Panc1 (cell line): ENCODE measurements at regions of chr4 and their contacts with region 1.

Region 1: GRCh38 chr4:109424093-109424841 is 9.3 kb upstream of the SEC24B start:
- DNase-seq: no peak
- ATAC-seq: no peak
- H3K4me3 ChIP-seq: no peak overlapping the region
- H3K27ac ChIP-seq: no peak overlapping the region
- H3K4me1 ChIP-seq: no peaks in the 10 kb centered on the region
- H3K27me3 ChIP-seq: no peaks in the 10 kb centered on the region
- CTCF ChIP-seq: no peak

Region 2: DNA sequence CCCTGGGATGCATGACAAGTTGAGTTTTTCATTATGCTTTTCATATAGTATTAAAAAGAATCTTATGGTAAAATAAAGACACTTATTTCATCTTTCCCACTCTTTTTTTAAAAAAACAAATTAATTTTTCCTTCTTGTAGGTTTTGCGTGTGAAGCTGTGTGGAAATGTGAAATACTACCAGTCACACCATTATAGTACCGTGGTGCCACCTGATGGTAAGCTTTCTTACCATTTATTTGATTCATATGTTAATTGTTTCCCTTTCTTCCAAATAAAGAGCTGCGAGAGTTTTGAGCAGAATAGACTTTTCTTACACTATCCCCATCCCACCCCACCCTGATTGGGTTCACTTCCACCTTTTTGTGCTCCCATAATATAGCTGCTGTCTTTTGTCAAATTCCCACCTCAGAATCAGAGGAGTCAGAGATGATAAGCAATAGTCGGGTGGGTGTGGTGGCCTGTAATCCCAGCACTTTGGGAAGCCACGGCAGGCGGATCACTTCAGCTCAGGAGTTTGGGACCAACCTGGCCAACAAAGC is 234.7 kb after region 1 on chr4:
- CTCF ChIA-PET with region 1: no interaction called
- POLR2A ChIA-PET with region 1: no interaction called
- in situ Hi-C with region 1: no loop called
- intact Hi-C with region 1: loop called (anchors 5 kb)
- DNase-seq: no peak
- ATAC-seq: no peak
- H3K4me3 ChIP-seq: no peak overlapping the region
- H3K27ac ChIP-seq: no peak overlapping the region
- H3K4me1 ChIP-seq: no peaks in the 10 kb centered on the region
- H3K27me3 ChIP-seq: no peaks in the 10 kb centered on the region
- CTCF ChIP-seq: peak; percentile 26; the same call in 1 of the 2 replicates

Region 3: DNA sequence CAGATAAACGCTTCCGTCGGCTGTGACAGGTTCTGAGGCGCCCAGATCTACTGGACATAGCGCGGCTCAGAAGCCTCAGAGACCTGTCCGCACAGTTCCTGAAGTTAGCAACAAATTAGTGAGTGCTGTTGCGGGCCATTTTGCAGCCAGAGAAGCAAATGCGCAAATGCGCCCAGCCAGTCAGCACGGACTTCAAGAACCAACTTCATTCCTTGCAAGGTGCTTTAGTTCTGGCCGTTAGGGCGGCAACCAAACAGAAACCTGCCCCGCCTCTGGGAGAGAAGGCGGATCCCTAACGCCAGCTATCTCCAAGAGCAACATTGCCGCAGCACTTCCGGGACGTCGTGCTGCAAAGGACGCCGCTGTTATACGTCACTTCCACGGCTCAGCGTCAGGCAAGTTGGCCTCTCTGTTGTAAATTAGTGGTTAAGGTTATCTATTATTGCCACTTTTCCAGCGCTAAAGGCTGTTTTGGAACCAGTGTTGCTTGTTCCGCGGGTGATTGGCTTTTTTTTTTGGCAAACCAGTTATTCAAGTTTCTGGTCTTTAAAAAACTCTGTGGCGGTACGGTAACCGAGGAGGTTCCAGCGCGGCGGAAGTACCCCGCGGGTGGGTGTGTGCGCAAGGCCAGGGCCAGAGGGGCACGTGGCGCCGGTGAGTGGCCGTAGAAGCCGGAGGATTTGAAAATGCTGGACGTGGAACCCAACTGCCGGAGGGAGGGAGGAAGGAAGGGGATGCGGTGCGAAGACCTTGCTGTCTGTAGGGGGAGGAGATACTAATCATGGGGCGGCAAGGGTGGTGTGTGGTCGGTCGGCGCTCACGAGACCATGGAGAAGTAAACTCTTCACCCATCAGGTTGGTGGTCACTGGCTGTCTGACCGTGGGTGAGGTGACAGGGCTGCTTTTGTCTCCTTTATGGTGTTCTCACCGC is 391.1 kb after region 1 on chr4 and contains the start of gene GAR1:
- CTCF ChIA-PET with region 1: no interaction called
- POLR2A ChIA-PET with region 1: no interaction called
- in situ Hi-C with region 1: no loop called
- intact Hi-C with region 1: loop called (anchors 10 kb)
- DNase-seq: peak; percentile 77
- ATAC-seq: peak; percentile 99
- H3K4me3 ChIP-seq: peak within 1 kb of the TSS; percentile 97 to 99
- H3K27ac ChIP-seq: peak within 1 kb of the TSS; percentile 92
- H3K4me1 ChIP-seq: peaks cover 5% of the 10 kb centered on the region; the same call in 1 of the 2 replicates
- H3K27me3 ChIP-seq: no peaks in the 10 kb centered on the region
- CTCF ChIP-seq: no peak
- total RNA-seq, gene GAR1: 23.6 TPM

Region 4: DNA sequence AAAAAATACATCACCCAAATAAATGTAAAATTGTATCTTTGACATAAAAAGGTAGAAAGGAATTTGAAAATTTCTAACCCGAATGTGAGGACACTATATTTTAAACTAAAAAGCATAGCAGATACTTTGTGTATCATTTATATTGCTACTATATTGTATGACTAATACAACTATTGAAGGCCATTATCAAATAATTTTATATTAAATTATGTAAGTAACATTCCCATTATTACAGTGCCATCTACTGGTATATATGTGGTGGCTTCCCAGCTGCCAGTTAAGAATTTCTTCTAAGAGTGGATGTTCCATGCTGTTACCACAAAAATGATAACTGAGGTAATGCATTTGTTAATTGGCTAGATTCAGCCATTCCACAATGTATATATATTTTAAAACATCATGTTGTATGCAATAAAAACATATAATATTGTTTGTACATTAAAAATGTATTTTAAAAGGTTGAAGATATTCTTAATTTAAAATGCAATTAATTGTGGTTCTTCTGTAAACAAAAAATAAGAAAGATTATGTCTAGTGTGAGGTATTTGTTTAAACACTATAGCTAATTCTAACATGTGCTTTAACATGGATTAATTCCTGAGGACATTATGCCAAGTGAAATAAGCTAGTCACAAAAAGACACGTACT is 553.7 kb after region 1 on chr4:
- CTCF ChIA-PET with region 1: no interaction called
- POLR2A ChIA-PET with region 1: no interaction called
- in situ Hi-C with region 1: no loop called
- intact Hi-C with region 1: loop called (anchors 2 kb)
- DNase-seq: no peak
- ATAC-seq: no peak
- H3K4me3 ChIP-seq: no peak overlapping the region
- H3K27ac ChIP-seq: no peak overlapping the region
- H3K4me1 ChIP-seq: no peaks in the 10 kb centered on the region
- H3K27me3 ChIP-seq: peaks cover 3% of the 10 kb centered on the region
- CTCF ChIP-seq: peak; percentile 56; the same call in 1 of the 2 replicates